SK-N-SH (cell line): ENCODE measurements at regions of chr12 and their contacts with region 1.

Region 1: GRCh38 chr12:94875525-94875924 is 128.0 kb downstream of the NDUFA12 start:
- DNase-seq: peak; percentile 44
- H3K4me3 ChIP-seq: no peak overlapping the region
- H3K27ac ChIP-seq: no peak overlapping the region
- H3K4me1 ChIP-seq: peaks cover 0 to 3% of the 10 kb centered on the region in 2 experiments; a peak in 1 of 4 replicates
- H3K27me3 ChIP-seq: peaks cover 41% of the 10 kb centered on the region
- CTCF ChIP-seq: peak; percentile 17; the same call in 1 of the 2 replicates
- EP300 ChIP-seq: no peak
- RAD21 ChIP-seq: peak; percentile 69

Region 2: DNA sequence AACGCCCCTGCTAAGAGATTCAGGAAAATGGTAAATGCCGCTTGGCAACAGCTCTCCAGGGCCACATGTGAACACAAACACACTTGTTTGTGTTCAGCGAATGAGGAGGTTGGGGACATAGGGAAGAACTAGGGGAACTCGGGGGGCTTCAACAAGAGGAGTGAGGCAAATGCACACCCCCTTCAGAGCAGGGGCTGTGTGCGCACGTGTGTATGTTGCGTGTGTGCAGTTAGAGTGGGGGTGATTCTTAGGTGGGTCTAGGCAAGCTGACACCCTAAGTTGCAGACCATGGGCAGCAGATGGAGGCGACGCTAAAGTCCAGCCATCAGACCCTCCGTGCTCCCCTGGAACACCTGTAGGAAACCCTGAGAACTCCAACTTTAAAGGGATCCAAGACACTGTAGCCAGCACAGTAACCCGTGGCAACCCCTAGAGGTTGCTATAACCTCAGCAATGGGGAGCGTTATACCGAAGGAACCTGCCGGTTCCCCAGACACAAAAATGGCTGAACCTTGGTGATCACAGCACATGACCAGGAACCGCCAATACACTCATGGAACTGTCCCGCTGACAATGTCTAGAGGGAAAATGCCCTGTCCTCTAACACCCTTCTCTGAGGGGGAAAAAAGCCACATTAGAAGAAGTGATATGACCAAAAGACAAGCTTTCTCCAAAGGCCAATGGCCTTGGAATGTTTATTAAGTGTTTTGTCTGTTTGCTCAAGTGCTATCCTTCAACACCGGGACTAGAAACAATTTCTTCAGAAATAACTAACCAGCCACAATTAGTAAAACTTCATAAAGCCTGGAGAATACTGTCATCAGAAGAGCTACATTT is 329.4 kb before region 1 on chr12:
- CTCF ChIA-PET with region 1: interaction called, 25 read pairs
- POLR2A ChIA-PET with region 1: no interaction called
- DNase-seq: peak; percentile 75
- H3K4me3 ChIP-seq: no peak overlapping the region
- H3K27ac ChIP-seq: no peak overlapping the region
- H3K4me1 ChIP-seq: no peaks in the 10 kb centered on the region
- H3K27me3 ChIP-seq: no peaks in the 10 kb centered on the region
- CTCF ChIP-seq: peak; percentile 70
- EP300 ChIP-seq: no peak
- RAD21 ChIP-seq: peak; percentile 95

Region 3: DNA sequence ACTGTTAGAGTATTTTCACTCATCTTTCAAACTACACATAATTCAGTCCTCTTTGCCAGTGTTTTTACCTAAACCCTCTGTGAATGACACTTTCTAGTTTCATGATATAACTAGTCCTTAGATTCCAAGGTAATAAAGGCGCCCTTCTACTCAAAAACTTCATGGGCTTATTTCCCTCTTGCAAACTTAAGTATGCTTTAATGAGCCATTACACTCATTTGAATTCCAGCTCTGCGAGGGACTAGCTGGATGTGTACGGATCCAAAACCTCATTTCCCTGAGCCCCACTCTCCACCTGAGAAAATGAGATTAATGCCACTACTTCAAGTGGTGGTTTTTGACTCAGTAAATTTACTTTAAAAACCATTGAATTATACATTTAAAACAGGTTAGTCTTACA is 13.1 kb before region 1 on chr12:
- CTCF ChIA-PET with region 1: interaction called, 12 read pairs
- POLR2A ChIA-PET with region 1: no interaction called
- DNase-seq: no peak
- H3K4me3 ChIP-seq: no peak overlapping the region
- H3K27ac ChIP-seq: no peak overlapping the region
- H3K4me1 ChIP-seq: no peaks in the 10 kb centered on the region
- H3K27me3 ChIP-seq: no peaks in the 10 kb centered on the region
- CTCF ChIP-seq: no peak
- EP300 ChIP-seq: no peak
- RAD21 ChIP-seq: no peak

Region 4: DNA sequence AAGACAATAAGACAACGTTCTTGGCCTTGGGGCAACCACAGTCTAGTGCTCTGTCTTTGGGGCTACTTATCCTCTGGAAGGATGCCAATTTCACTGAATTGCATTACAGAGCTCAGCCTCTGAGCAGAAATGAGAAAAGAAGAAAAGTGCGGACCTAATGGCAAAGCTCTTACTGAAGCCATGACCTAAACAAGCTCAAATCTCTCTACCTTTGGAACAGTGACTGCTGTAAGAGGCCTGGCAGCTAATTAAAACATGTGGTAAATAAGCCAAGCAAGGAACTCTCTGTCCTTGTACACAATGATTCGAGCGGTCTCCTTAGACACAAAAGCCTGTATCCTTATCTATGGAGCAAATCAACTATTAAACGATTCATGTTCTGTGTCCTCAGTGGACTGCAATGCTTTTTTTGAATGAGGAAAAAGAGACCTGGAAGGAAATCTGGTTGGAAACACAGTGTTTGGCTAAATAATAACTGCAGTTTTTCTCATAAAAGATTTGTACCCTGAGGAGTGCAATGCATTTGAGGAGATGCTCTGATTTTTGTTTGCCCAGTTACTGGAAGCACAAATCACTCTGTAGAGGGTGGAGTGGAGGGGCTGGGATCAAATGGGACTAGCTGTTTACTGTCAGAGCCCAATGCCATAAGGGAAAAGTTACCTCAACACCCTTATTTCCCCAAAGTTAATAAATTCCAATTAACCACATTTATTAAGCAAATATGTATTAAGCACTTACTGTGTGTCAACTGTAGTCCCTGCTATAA is 14.1 kb after region 1 on chr12:
- CTCF ChIA-PET with region 1: interaction called, 26 read pairs
- POLR2A ChIA-PET with region 1: no interaction called
- DNase-seq: peak; percentile 26
- H3K4me3 ChIP-seq: no peak overlapping the region
- H3K27ac ChIP-seq: peak overlapping the region in 1 of 2 experiments; percentile 19; a peak in 1 of 4 replicates
- H3K4me1 ChIP-seq: peaks cover 0 to 4% of the 10 kb centered on the region in 2 experiments; a peak in 2 of 4 replicates
- H3K27me3 ChIP-seq: no peaks in the 10 kb centered on the region
- CTCF ChIP-seq: no peak
- EP300 ChIP-seq: no peak
- RAD21 ChIP-seq: no peak

Region 5: DNA sequence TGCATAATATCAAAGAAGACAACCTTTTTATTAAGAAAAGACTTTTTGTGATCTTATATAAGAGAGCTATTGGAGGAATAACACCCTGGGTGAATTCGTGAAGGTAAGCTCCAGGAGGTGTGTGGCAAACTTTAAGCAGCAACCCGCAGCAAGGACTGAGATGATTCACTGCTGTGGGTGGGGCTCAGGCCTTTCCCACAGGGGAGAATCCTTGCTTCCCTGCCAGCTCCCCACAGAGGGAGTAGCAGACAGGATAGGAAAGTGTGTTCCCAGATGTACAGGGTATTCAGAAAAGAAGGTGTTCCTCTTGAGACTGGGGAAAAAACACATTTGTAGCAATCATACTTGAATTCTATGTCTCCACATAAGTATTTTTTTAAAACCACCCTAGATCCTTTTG is 118.8 kb after region 1 on chr12:
- CTCF ChIA-PET with region 1: no interaction called
- POLR2A ChIA-PET with region 1: no interaction called
- DNase-seq: no peak
- H3K4me3 ChIP-seq: no peak overlapping the region
- H3K27ac ChIP-seq: no peak overlapping the region
- H3K4me1 ChIP-seq: no peaks in the 10 kb centered on the region
- H3K27me3 ChIP-seq: no peaks in the 10 kb centered on the region
- CTCF ChIP-seq: no peak
- EP300 ChIP-seq: no peak
- RAD21 ChIP-seq: no peak